Activated CD4-positive, alpha-beta T cell treated with anti-CD3 and anti-CD28 coated beads, Interleukin-2, amount 10 ng/mL, durations not matched to agents 24 days and 14 days (primary cell): ENCODE measurements at regions of chr17 and their contacts with region 1.

Region 1: DNA sequence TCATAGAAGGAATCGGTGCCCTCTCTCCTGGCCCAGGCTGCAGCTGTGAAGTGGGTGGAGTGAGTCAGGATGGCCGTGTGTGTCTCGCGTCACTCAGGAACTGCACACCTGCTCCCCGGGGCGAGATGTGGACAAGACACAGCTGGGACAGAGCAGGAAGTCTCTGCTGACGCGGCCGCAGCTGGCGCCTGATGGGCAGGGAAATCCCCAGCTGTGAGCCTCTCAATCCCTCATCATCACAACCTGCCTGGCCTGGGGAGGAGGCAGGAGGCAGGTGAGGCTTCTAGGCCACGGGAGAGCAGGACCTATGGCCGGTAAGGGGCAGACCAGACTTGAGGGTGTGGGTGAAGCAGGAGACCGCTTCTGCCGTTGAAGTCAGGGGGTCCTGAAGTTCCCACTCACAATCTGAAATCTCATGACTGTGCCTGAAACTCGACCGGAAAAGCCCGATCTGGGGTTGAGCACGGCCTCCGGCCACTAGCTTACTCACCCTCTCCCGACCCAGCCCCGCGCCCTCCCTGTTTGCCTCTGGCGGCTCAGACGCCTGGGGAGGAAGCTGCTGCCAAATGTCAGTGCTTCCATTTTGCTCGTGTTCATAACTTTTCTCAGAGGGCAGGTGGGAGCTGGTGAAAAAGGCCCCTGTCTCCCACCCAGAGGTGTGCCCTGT is 1.1 kb upstream of the TRPV3 start:
- DNase-seq: peak; percentile 86
- H3K4me3 Mint-ChIP-seq: no peak overlapping the region
- H3K27ac Mint-ChIP-seq: peak overlapping the region; percentile 86
- H3K4me1 Mint-ChIP-seq: peaks cover 24% of the 10 kb centered on the region
- H3K27me3 Mint-ChIP-seq: no peaks in the 10 kb centered on the region

Region 2: DNA sequence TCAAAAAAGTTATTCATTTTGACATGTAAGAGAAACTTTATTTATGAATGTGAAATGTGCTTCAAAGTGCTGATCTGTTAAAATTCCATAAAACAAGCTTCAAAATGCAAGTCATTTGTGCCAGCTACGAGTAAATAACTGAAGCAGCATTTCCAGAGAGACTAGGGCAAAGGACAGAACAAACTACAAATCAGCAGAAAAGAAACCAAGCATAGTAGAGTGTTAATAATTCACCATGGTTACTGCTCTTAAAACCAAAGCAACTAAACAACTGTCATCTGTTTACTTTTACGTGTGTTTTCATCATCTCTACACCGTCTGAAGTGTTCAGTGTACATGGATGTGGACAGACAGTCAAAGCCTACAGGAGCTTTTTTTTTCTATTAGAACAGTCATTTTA is 84.5 kb before region 1 on chr17:
- intact Hi-C with region 1: no loop called
- DNase-seq: no peak
- H3K4me3 Mint-ChIP-seq: no peak overlapping the region
- H3K27ac Mint-ChIP-seq: no peak overlapping the region
- H3K4me1 Mint-ChIP-seq: peaks cover 5% of the 10 kb centered on the region
- H3K27me3 Mint-ChIP-seq: peaks cover 7% of the 10 kb centered on the region

Region 3: GRCh38 chr17:3502466-3502865 is 56.3 kb before region 1 on chr17:
- intact Hi-C with region 1: no loop called
- DNase-seq: no peak
- H3K4me3 Mint-ChIP-seq: no peak overlapping the region
- H3K27ac Mint-ChIP-seq: no peak overlapping the region
- H3K4me1 Mint-ChIP-seq: no peaks in the 10 kb centered on the region
- H3K27me3 Mint-ChIP-seq: no peaks in the 10 kb centered on the region

Region 4: GRCh38 chr17:3529817-3530741 is 28.7 kb before region 1 on chr17:
- intact Hi-C with region 1: no loop called
- DNase-seq: no peak
- H3K4me3 Mint-ChIP-seq: no peak overlapping the region
- H3K27ac Mint-ChIP-seq: no peak overlapping the region
- H3K4me1 Mint-ChIP-seq: peaks cover 4% of the 10 kb centered on the region
- H3K27me3 Mint-ChIP-seq: peaks cover 2% of the 10 kb centered on the region

Region 5: DNA sequence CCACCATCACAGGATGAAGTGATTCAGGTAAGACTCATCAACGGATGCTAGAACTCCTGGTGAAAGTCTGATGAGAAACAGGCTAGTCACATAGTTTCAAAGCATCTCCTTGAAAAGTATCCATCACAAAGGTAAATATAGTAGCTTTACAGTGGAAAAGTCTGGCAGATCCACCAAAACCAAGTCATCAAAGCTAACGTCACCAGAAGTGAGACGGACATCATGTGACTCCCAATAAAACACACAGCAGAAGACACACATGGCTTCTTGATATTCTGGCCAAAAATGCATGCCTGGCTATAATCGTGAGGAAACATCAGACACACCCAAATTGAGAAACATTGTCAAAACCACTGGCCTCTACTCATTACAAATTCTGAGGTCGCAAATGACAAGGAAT is 16.8 kb after region 1 on chr17:
- intact Hi-C with region 1: loop called (anchors 1 kb)
- DNase-seq: no peak
- H3K4me3 Mint-ChIP-seq: no peak overlapping the region
- H3K27ac Mint-ChIP-seq: no peak overlapping the region
- H3K4me1 Mint-ChIP-seq: no peaks in the 10 kb centered on the region
- H3K27me3 Mint-ChIP-seq: no peaks in the 10 kb centered on the region

Region 6: DNA sequence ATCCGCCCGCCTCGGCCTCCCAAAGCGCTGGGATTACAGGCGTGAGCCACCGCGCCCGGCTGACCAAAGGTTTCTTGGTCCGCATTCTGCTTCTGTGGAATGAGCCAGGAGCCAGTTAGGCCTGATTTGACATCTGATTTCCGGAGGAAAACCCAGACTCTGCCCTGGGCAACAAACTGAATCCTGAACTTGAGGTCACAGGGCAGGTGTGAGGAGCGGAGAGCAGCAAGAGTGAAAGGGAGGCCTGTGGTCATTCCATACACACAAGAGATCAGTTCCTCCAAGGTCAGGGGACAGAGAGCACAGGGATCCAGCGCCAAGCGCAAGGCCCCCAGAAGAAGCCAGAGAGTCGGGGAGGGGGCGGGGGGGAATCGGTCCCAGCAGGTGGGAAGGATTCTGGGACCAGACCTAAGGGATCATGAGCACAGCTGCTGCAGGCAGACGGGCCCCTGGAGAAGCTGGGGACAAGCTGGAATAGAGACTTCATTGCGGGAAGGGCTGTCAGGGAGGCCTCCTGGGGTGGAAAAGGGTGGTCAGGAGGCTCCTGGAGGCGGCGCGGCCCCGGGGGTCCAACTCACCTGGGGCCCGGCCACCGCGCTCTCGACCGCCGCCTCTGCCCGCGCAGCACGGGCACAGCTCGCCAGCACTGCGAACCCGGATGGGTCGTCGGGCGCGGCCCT is 76.9 kb after region 1 on chr17:
- intact Hi-C with region 1: no loop called
- DNase-seq: peak; percentile 63
- H3K4me3 Mint-ChIP-seq: peak overlapping the region; percentile 98
- H3K27ac Mint-ChIP-seq: peak overlapping the region; percentile 73
- H3K4me1 Mint-ChIP-seq: peaks cover 39% of the 10 kb centered on the region
- H3K27me3 Mint-ChIP-seq: no peaks in the 10 kb centered on the region